K562 (cell line): ENCODE measurements at regions of chr5 and their contacts with region 1.

Region 1: GRCh38 chr5:126339215-126339805 is 83.9 kb upstream of the GRAMD2B start:
- DNase-seq: peak; percentile 38 to 73 (median 56)
- ATAC-seq: peak; percentile 77
- H3K4me3 ChIP-seq: no peak overlapping the region
- H3K27ac ChIP-seq: no peak overlapping the region
- H3K4me1 ChIP-seq: no peaks in the 10 kb centered on the region
- H3K27me3 ChIP-seq: peaks cover 0 to 4% of the 10 kb centered on the region in 2 experiments; a peak in 1 of 5 replicates
- CTCF ChIP-seq: peak; percentile 59 to 84 (median 67); a peak in 5 of 6 replicates
- EP300 ChIP-seq: no peak
- POLR2A ChIP-seq: no peak
- RAD21 ChIP-seq: peak; percentile 91 to 95

Region 2: GRCh38 chr5:125992050-125992449 is 347.3 kb before region 1 on chr5:
- CTCF ChIA-PET with region 1: no interaction called
- POLR2A ChIA-PET with region 1: no interaction called
- in situ Hi-C with region 1: no loop called
- intact Hi-C with region 1: no loop called
- DNase-seq: no peak
- ATAC-seq: no peak
- H3K4me3 ChIP-seq: no peak overlapping the region
- H3K27ac ChIP-seq: no peak overlapping the region
- H3K4me1 ChIP-seq: no peaks in the 10 kb centered on the region
- H3K27me3 ChIP-seq: no peaks in the 10 kb centered on the region
- CTCF ChIP-seq: no peak
- EP300 ChIP-seq: no peak
- POLR2A ChIP-seq: no peak
- RAD21 ChIP-seq: no peak

Region 3: DNA sequence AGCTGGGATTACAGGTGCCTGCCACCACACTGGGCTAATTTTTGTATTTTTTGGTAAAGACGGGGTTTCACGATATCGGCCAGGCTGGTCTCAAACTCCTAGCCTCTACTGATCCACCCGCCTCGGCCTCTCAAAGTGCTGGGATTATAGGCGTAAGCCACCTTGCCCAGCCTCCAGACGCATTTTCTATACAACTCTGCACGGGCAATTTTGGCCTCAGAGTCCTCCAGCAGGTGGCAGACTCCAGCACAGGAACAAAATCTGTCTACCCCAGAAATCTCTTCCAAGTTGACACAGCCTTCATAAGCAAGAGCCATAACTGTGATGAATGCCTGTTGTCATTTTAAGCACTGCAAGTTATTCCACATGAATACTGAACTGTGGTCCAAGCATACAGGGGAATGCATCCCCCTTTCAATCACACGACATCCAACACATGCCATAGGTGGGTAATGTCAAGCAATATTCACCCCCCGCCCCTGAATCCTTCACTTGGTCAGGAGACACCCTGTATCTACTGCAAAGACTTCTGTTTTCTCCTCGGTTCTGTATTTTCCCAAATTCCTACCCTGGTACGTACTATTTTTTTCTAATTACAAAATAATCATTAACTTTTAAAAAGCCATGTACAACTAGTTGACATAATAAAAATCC is 204.9 kb after region 1 on chr5:
- CTCF ChIA-PET with region 1: interaction called, 41 read pairs
- POLR2A ChIA-PET with region 1: interaction called, 3 read pairs
- in situ Hi-C with region 1: no loop called
- intact Hi-C with region 1: loop called (anchors 1 kb)
- DNase-seq: peak; percentile 37 to 74 (median 48)
- ATAC-seq: peak; percentile 90
- H3K4me3 ChIP-seq: no peak overlapping the region
- H3K27ac ChIP-seq: no peak overlapping the region
- H3K4me1 ChIP-seq: no peaks in the 10 kb centered on the region
- H3K27me3 ChIP-seq: peaks cover 5 to 19% of the 10 kb centered on the region in 2 experiments; a peak in 4 of 5 replicates
- CTCF ChIP-seq: peak; percentile 65 to 76 (median 73)
- EP300 ChIP-seq: no peak
- POLR2A ChIP-seq: no peak
- RAD21 ChIP-seq: peak; percentile 55 to 72

Region 4: DNA sequence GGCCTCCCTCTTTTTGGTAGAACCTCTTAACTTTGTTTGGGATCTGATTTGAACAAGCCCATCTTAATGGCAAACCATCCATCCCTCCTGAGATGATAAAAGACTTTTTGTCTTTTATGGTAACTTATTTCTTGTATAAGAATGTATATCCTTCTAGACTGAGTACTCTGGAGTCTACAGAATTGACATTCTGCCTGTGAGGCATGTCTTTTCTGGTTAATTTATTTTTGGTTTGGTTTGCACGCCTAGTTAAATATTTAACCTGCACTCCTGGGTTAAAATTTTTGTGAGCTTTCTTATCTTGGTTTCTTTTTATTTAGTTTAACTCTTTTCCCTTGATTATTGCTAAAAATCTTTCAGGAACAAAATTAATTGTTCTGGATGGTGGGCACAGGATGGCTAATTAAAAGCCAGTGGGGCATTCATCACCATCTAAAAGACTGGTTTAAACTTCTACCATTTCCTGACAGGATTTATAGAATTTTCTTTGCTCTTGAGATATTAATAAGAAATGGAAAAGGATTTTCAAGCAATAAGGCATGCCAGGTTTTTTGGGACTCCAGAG is 311.8 kb after region 1 on chr5:
- CTCF ChIA-PET with region 1: no interaction called
- POLR2A ChIA-PET with region 1: interaction called, 3 read pairs
- in situ Hi-C with region 1: loop called (anchors 10 kb)
- intact Hi-C with region 1: loop called (anchors 5 kb)
- DNase-seq: no peak
- ATAC-seq: no peak
- H3K4me3 ChIP-seq: no peak overlapping the region
- H3K27ac ChIP-seq: no peak overlapping the region
- H3K4me1 ChIP-seq: no peaks in the 10 kb centered on the region
- H3K27me3 ChIP-seq: no peaks in the 10 kb centered on the region; a peak in 1 of 5 replicates
- CTCF ChIP-seq: no peak
- EP300 ChIP-seq: no peak
- POLR2A ChIP-seq: no peak
- RAD21 ChIP-seq: no peak

Region 5: GRCh38 chr5:127313847-127314473 is 974.6 kb after region 1 on chr5:
- CTCF ChIA-PET with region 1: interaction called, 5 read pairs
- POLR2A ChIA-PET with region 1: no interaction called
- in situ Hi-C with region 1: loop called (anchors 25 kb)
- intact Hi-C with region 1: no loop called
- DNase-seq: peak; percentile 70 to 72 (median 71)
- ATAC-seq: peak; percentile 96
- H3K4me3 ChIP-seq: no peak overlapping the region
- H3K27ac ChIP-seq: no peak overlapping the region
- H3K4me1 ChIP-seq: no peaks in the 10 kb centered on the region
- H3K27me3 ChIP-seq: 0 out of 5 replicates have a peak, but pooled peaks cover 0 to 4% of the 10 kb centered on the region in 2 experiments
- CTCF ChIP-seq: peak; percentile 78 to 88 (median 79)
- EP300 ChIP-seq: no peak
- POLR2A ChIP-seq: no peak
- RAD21 ChIP-seq: peak; percentile 65 to 75

Region 6: GRCh38 chr5:127492854-127493738 is 1153.8 kb after region 1 on chr5:
- CTCF ChIA-PET with region 1: interaction called, 4 read pairs
- POLR2A ChIA-PET with region 1: no interaction called
- in situ Hi-C with region 1: no loop called
- intact Hi-C with region 1: loop called (anchors 5 kb)
- DNase-seq: peak; percentile 38 to 45 (median 43)
- ATAC-seq: peak; percentile 78
- H3K4me3 ChIP-seq: no peak overlapping the region
- H3K27ac ChIP-seq: no peak overlapping the region
- H3K4me1 ChIP-seq: no peaks in the 10 kb centered on the region; a peak in 1 of 5 replicates
- H3K27me3 ChIP-seq: no peaks in the 10 kb centered on the region
- CTCF ChIP-seq: peak; percentile 79 to 89 (median 80)
- EP300 ChIP-seq: no peak
- POLR2A ChIP-seq: no peak
- RAD21 ChIP-seq: peak; percentile 65 to 67